ENCODE measurements at regions of chr4 and their contacts with region 1.

Region 1: DNA sequence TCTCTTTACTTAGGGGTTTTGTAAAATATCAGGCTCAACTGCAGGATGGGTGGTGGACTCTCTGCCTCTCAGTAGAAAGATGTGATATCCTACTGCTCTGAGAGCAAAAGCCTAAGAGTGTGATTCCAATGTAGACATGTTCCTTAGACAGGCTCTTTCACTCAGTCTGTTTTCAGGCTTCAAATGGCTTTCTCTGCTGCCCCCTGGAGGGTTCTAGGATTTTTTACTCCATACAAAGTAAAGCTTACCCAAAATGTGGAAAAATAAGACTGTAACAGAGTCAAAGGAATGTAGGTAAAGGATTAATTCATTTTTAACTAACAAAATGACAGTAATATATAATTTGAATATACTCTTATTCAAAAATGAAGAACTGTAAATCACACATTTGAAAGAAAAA is 32.1 kb downstream of the ZGRF1 start:
- DNase-seq: peak; percentile 13
- H3K4me3 ChIP-seq: no peak overlapping the region
- H3K27ac ChIP-seq: no peak overlapping the region
- H3K27me3 ChIP-seq: no peaks in the 10 kb centered on the region
- CTCF ChIP-seq: peak; percentile 78

Region 2: DNA sequence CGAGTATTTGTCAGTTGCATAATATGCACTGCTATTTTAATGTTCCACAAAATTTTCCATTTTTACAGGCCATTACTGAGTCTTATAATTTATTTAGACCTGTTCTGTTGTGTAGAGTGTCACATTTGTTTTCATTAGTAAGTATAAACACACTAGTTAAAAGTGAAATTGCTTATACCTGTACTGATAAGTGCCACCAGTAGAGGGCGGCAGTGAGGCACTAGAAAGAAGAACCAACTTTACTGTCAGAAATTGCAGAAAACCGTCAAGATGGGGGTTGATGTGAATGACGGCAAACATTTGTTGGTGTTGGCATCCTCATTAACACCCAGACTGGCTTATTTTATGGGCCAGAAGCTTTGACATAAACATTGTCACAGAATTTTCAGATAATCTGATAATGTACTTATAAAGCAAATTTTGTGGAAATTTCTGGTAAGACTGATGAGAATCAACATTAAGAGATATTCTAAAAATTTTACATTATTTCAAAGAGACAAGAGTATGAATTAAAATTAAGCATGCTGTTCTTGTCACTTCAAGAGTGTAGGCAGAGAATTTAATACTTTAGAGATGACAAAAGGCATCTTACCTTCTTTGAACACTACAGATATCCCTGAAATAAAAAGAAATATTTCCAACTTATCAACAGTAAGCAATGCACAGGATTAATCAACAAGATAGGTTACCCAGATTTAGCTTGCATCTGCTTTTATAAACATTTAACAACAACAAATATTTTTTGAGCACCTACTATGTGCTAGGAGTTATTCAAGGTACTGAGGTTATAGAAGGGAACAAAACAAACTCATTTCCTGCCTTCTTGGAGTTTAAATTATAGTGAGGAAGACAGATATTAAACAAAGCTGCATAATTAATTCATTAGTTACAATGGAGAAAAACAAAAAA is 282.6 kb before region 1 on chr4:
- CTCF ChIA-PET with region 1: interaction called, 199 read pairs
- POLR2A ChIA-PET with region 1: no interaction called
- DNase-seq: no peak
- H3K4me3 ChIP-seq: no peak overlapping the region
- H3K27ac ChIP-seq: no peak overlapping the region
- H3K27me3 ChIP-seq: no peaks in the 10 kb centered on the region
- CTCF ChIP-seq: peak; percentile 89

Region 3: GRCh38 chr4:112327965-112328733 is 276.4 kb before region 1 on chr4:
- CTCF ChIA-PET with region 1: interaction called, 199 read pairs
- POLR2A ChIA-PET with region 1: no interaction called
- DNase-seq: peak; percentile 29
- H3K4me3 ChIP-seq: no peak overlapping the region
- H3K27ac ChIP-seq: no peak overlapping the region
- H3K27me3 ChIP-seq: no peaks in the 10 kb centered on the region
- CTCF ChIP-seq: peak; percentile 69

Region 4: GRCh38 chr4:112589206-112589605 is 15.4 kb before region 1 on chr4:
- CTCF ChIA-PET with region 1: interaction called, 11 read pairs
- POLR2A ChIA-PET with region 1: interaction called, 10 read pairs
- DNase-seq: no peak
- H3K4me3 ChIP-seq: no peak overlapping the region
- H3K27ac ChIP-seq: no peak overlapping the region
- H3K27me3 ChIP-seq: no peaks in the 10 kb centered on the region
- CTCF ChIP-seq: no peak

Region 5: GRCh38 chr4:112616984-112617383 is 12.4 kb after region 1 on chr4:
- CTCF ChIA-PET with region 1: interaction called, 18 read pairs
- POLR2A ChIA-PET with region 1: interaction called, 4 read pairs
- DNase-seq: no peak
- H3K4me3 ChIP-seq: no peak overlapping the region
- H3K27ac ChIP-seq: no peak overlapping the region
- H3K27me3 ChIP-seq: no peaks in the 10 kb centered on the region
- CTCF ChIP-seq: no peak

Region 6: DNA sequence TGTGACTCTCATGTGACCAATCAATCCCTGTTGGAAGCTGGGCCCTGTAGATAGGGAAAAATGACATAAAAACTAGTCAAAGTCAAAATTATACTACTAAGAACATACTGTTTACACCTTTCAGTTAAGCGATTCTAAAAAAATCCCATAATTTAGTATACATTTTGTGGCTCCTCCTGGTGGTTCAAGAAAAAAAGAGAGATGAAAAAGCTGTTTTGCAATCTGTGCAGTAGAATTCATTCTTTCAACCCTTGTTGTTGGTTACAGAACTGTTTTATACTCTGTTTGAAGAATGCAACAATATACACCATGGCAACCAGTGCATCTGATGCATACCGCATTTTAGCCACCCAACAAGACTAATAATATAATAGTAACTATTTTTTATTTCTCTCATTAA is 378.1 kb after region 1 on chr4:
- CTCF ChIA-PET with region 1: no interaction called
- POLR2A ChIA-PET with region 1: no interaction called
- DNase-seq: no peak
- H3K4me3 ChIP-seq: no peak overlapping the region
- H3K27ac ChIP-seq: no peak overlapping the region
- H3K27me3 ChIP-seq: no peaks in the 10 kb centered on the region
- CTCF ChIP-seq: no peak

Measured in AG04450 (cell line).